ENCODE measurements at regions of chr1 and their contacts with region 1.

Region 1: GRCh38 chr1:180154325-180155181 is at the start of gene QSOX1:
- DNase-seq: peak; percentile 96
- H3K4me3 ChIP-seq: peak within 1 kb of the TSS; percentile 71 to 92 (median 84)
- H3K27ac ChIP-seq: peak within 1 kb of the TSS; percentile 92 to 95 (median 94)
- H3K4me1 ChIP-seq: peaks cover 0 to 21% (median 17%) of the 10 kb centered on the region in 4 donors
- H3K27me3 ChIP-seq: no peaks in the 10 kb centered on the region
- CTCF ChIP-seq: peak in 1 of 4 experiments; percentile 27
- EP300 ChIP-seq: peak in 1 of 4 donors; percentile 27
- POLR2A ChIP-seq: peak; percentile 52 to 56
- total RNA-seq, gene QSOX1: 64.5 to 102 (median 78.9) TPM

Region 2: DNA sequence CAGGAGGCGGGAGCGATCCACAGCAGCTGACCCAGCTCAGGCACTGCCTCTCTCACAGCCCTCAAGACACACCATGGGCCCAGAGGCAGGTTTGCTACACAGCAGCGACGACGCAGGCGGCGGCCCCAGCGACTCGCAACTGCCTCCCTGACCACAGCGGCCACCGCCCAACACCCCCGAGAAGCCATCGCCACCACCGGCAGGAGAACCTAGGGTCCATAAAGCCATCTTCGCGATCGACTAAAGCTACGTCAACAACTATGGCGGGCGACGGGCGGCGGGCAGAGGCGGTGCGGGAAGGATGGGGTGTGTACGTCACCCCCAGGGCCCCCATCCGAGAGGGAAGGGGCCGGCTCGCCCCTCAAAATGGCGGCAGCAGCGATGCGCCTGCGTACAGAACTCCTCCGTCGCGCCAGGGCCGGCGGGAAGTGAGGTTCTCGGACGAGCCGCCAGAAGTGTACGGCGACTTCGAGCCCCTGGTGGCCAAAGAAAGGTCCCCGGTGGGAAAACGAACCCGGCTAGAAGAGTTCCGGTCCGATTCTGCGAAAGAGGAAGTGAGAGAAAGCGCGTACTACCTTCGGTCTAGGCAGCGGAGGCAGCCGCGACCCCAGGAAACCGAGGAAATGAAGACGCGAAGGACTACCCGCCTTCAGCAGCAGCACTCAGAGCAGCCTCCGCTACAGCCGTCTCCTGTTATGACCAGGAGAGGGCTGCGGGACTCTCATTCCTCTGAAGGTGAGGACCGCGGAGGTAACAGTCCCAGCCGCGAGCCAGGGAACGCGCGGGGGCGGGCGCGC is 272.1 kb before region 1 on chr1 and contains the start of gene TOR1AIP1:
- intact Hi-C with region 1: loop called (anchors 2 kb)
- DNase-seq: peak; percentile 99
- H3K4me3 ChIP-seq: peak within 1 kb of the TSS; percentile 61 to 91 (median 86)
- H3K27ac ChIP-seq: peak within 1 kb of the TSS; percentile 95 to 99 (median 98)
- H3K4me1 ChIP-seq: peaks cover 0 to 57% (median 53%) of the 10 kb centered on the region in 4 donors
- H3K27me3 ChIP-seq: no peaks in the 10 kb centered on the region
- CTCF ChIP-seq: peak; percentile 53 to 73 (median 63)
- EP300 ChIP-seq: peak in 1 of 4 donors; percentile 84
- POLR2A ChIP-seq: peak; percentile 86
- total RNA-seq, gene TOR1AIP1: 117 to 152 (median 126) TPM

Region 3: DNA sequence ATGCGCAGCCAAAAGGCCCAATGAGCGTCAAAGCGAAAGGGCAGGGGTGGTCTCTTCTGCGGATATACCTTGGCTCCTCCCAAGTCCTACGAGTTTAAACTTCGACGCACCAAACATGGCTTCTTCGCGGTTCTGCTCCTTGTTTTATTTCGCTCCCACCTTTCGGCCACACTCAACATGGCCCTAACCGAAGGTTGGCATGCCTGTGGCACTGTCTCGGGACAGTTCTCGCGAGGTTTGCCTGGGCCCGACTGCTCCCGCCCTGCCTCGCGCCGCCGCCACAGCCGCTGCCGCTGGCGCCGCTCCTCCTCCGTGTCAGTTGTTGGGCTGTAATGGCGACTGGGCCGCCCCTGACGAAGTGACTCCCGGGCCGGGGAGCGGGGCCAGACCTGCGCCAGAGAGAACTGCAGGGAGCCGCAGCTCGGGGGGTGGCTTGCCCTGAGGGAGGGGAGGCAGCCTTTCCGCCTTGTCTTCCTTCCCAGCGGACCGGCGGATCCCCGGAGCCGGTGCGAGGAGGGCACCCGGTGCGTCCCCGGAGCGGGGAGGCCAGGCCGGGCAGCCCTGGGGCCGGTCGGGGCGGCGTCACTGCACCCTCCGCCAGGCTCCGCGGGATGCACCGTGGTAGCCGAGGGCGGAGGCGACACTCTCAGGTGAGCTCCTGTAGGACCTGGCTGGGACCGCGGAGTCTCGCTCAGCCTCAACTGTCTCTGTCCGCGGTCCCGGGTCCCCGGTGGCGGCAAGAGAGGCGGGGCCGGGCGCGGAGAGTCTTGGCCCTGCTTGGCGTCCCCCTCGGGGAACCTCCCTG is 199.9 kb before region 1 on chr1 and contains the start of gene CEP350:
- intact Hi-C with region 1: loop called (anchors 10 kb)
- DNase-seq: peak; percentile 99
- H3K4me3 ChIP-seq: peak within 1 kb of the TSS; percentile 68 to 98 (median 98)
- H3K27ac ChIP-seq: peak within 1 kb of the TSS; percentile 91 to 98 (median 97)
- H3K4me1 ChIP-seq: peaks cover 0 to 36% (median 16%) of the 10 kb centered on the region in 4 donors
- H3K27me3 ChIP-seq: no peaks in the 10 kb centered on the region
- CTCF ChIP-seq: no peak
- EP300 ChIP-seq: peak in 1 of 4 donors; percentile 36
- POLR2A ChIP-seq: peak; percentile 51 to 79
- total RNA-seq, gene CEP350: 45.2 to 67.6 (median 57.8) TPM

Region 4: GRCh38 chr1:180101411-180101810 is 53.1 kb before region 1 on chr1:
- intact Hi-C with region 1: loop called (anchors 10 kb)
- DNase-seq: no peak
- H3K4me3 ChIP-seq: no peak overlapping the region
- H3K27ac ChIP-seq: no peak overlapping the region
- H3K4me1 ChIP-seq: peaks cover 0 to 21% (median 10%) of the 10 kb centered on the region in 4 donors
- H3K27me3 ChIP-seq: no peaks in the 10 kb centered on the region
- CTCF ChIP-seq: no peak
- EP300 ChIP-seq: no peak
- POLR2A ChIP-seq: no peak

Region 5: GRCh38 chr1:180178511-180179161 is 24.1 kb after region 1 on chr1:
- intact Hi-C with region 1: loop called (anchors 1 kb)
- DNase-seq: peak; percentile 81
- H3K4me3 ChIP-seq: no peak overlapping the region
- H3K27ac ChIP-seq: no peak overlapping the region
- H3K4me1 ChIP-seq: peaks cover 0 to 11% (median 10%) of the 10 kb centered on the region in 4 donors
- H3K27me3 ChIP-seq: no peaks in the 10 kb centered on the region
- CTCF ChIP-seq: peak; percentile 84 to 94 (median 91)
- EP300 ChIP-seq: no peak
- POLR2A ChIP-seq: no peak